Activated CD8-positive, alpha-beta T cell treated with anti-CD3 and anti-CD28 coated beads, Interleukin-2, amount 10 ng/mL, durations not matched to agents 7 days and 5 days (primary cell): ENCODE measurements at regions of chr6 and their contacts with region 1.

Region 1: GRCh38 chr6:70706491-70707123 is 38.9 kb downstream of the SMAP1 start:
- DNase-seq: peak; percentile 28
- ATAC-seq: no peak
- H3K4me3 Mint-ChIP-seq: no peak overlapping the region
- H3K27ac Mint-ChIP-seq: no peak overlapping the region
- H3K4me1 Mint-ChIP-seq: peaks cover 8% of the 10 kb centered on the region
- H3K27me3 Mint-ChIP-seq: no peaks in the 10 kb centered on the region

Region 2: GRCh38 chr6:70717038-70717801 is 10.6 kb after region 1 on chr6:
- CTCF ChIA-PET with region 1: interaction called, 19 read pairs
- POLR2A ChIA-PET with region 1: interaction called, 3 read pairs
- DNase-seq: peak; percentile 32
- ATAC-seq: peak; percentile 76
- H3K4me3 Mint-ChIP-seq: no peak overlapping the region
- H3K27ac Mint-ChIP-seq: peak overlapping the region; percentile 23
- H3K4me1 Mint-ChIP-seq: peaks cover 32% of the 10 kb centered on the region
- H3K27me3 Mint-ChIP-seq: no peaks in the 10 kb centered on the region